ENCODE measurements at regions of chr6 and their contacts with region 1.

Region 1: DNA sequence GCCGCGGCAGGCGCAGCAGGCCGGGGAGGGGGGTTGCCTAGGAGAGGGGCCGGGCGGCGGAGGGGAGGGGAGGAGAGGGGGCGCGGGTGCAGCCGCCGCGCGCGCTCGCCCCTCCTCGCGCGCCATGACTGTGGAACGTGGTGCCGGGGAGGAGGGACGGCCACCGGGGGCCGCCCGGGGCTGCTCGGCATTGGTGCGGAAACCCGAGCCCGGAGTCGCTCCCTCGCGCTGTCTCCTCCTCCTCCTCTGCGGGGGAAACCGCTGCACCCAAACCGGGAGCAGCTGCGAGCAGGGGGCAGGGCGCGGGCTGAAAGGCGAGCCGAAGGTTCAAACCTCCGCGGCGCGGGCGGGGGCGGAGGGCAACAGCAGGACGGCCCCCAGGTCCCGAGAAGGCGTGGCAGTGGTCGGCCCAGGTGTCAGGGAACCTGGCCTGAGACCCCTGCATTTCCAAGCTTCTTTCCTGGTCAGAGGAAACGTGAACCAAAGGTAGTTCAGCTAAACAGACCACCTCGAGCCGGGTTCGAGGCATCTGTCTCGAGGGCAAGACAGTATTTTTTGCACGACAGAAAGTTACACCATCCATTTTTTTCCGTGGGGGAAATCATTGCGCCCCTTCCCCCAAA is 1.4 kb upstream of the TRERF1 start:
- DNase-seq: peak; percentile 90 to 91
- ATAC-seq: peak; percentile 91 to 96 (median 92)
- H3K4me3 ChIP-seq: peak overlapping the region; percentile 61 to 91 (median 80)
- H3K27ac ChIP-seq: peak overlapping the region; percentile 68 to 97 (median 92)
- H3K4me1 ChIP-seq: peaks cover 3 to 46% (median 19%) of the 10 kb centered on the region in 9 donors
- H3K27me3 ChIP-seq: no peaks in the 10 kb centered on the region
- CTCF ChIP-seq: peak in 4 of 9 donors; percentile 7 to 27 (median 8)

Region 2: GRCh38 chr6:41936073-41936837 is 516.9 kb before region 1 on chr6:
- intact Hi-C with region 1: no loop called
- DNase-seq: peak; percentile 56 to 81
- ATAC-seq: peak; percentile 46 to 79 (median 70)
- H3K4me3 ChIP-seq: peak overlapping the region in 1 of 10 donors; percentile 11
- H3K27ac ChIP-seq: peak overlapping the region in 8 of 10 donors; percentile 11 to 94 (median 88)
- H3K4me1 ChIP-seq: peaks cover 26 to 64% (median 49%) of the 10 kb centered on the region in 9 donors
- H3K27me3 ChIP-seq: no peaks in the 10 kb centered on the region
- CTCF ChIP-seq: peak; percentile 67 to 85 (median 81)

Region 3: DNA sequence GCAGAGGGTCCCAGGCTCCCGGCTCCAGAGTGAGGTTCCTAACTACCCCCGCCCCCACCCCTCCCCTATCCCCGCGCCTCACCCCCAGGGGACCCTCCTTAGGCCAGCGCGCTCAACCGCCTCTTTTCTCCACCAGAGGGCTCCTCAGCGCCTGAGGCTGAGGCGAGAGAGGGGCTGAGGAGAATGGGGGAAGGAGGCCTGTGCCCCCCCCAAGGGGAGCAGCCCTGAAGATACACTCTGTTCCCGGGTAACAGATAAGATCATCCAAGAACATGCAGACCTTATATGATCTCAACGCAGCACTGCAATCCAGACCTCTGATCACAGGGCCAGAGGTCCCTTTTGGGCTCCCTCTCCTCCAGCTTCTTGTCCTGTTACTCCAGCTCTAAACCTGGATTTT is 192.2 kb before region 1 on chr6:
- intact Hi-C with region 1: loop called in 5 of 10 experiments (anchors 5 to 10 kb)
- DNase-seq: peak in 1 of 2 donors; percentile 54
- ATAC-seq: peak; percentile 53 to 80 (median 70)
- H3K4me3 ChIP-seq: peak overlapping the region in 1 of 10 donors; percentile 8
- H3K27ac ChIP-seq: peak overlapping the region in 4 of 10 donors; percentile 19 to 46 (median 32)
- H3K4me1 ChIP-seq: peaks cover 6 to 50% (median 16%) of the 10 kb centered on the region in 9 donors
- H3K27me3 ChIP-seq: no peaks in the 10 kb centered on the region
- CTCF ChIP-seq: peak in 8 of 9 donors; percentile 31 to 68 (median 61)

Region 4: DNA sequence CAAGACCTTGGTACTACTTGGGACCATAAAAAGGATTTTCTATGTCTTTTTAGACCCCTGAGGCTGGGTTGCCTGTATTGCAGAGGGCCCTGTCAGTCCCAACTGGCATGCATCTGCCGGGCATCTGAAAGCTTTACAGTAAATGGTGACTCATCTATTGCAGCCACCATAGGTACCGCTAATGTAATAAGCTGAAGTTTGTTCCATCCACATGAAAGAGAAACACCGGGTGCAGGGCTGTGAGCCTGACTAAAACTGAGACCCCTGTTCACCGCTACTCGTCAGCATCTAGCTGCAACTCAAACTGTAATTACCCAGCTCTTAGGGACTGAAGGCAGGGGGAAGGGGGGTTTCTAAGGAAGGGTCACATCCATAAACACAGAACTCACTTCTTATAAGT is 51.0 kb before region 1 on chr6:
- intact Hi-C with region 1: loop called in 4 of 10 experiments (anchors 2 to 5 kb)
- DNase-seq: no peak
- ATAC-seq: no peak
- H3K4me3 ChIP-seq: no peak overlapping the region
- H3K27ac ChIP-seq: peak overlapping the region in 1 of 10 donors; percentile 45
- H3K4me1 ChIP-seq: peaks cover 3 to 57% (median 38%) of the 10 kb centered on the region in 9 donors
- H3K27me3 ChIP-seq: no peaks in the 10 kb centered on the region
- CTCF ChIP-seq: no peak

Region 5: DNA sequence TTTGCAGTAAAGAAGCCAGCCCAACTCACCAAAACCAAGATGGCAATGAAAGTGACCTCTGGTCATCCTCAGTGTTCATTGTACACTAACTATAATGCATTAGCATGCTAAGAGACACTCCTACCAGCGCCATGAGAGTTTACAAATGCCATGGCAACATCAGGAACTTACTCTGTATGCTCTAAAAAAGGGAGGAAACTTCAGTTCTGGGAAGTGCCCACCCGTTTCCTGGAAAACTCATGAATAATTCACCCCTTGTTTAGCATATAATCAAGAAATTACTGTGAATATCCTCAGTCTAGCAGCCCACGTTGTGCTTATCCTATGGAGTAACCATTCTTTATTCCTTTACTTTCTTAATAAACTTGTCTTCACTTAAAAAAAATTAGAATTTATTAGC is 18.0 kb after region 1 on chr6:
- intact Hi-C with region 1: loop called in 1 of 10 experiments (anchors 1 kb)
- DNase-seq: no peak
- ATAC-seq: no peak
- H3K4me3 ChIP-seq: no peak overlapping the region
- H3K27ac ChIP-seq: no peak overlapping the region
- H3K4me1 ChIP-seq: no peaks in the 10 kb centered on the region
- H3K27me3 ChIP-seq: no peaks in the 10 kb centered on the region
- CTCF ChIP-seq: no peak

Region 6: DNA sequence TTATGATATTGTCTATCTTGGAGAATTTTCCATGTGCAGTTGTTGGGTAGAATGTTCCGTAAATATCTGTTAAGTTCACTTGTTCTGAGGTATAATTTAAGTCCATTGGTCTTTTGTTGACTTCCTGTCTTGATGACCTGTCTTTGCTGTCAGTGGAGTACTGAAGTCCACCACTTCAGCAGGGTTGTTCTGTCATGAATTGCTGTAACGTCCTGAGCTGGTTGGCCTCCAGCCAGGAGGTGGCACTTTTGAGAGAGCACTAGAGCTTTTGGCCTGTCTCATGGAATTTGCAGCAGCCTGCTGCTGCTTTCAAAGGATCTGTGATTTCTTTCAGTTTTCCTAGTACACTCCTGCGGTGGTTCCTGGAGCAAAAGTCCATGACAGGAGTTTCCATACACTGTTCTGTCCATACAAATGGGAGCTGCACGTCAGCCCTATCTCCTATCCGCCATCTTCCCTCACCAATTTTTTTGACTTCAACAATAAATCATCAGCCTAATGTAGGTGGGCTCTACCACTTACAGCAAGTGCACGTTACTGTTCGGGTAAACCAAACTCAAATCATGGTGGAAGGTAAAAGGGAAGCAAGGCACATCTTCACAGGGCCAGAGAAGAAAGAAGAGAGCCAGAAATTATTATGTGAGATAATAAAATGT is 45.5 kb after region 1 on chr6:
- intact Hi-C with region 1: no loop called
- DNase-seq: peak; percentile 11 to 49
- ATAC-seq: peak in 1 of 8 donors; percentile 41
- H3K4me3 ChIP-seq: no peak overlapping the region
- H3K27ac ChIP-seq: no peak overlapping the region
- H3K4me1 ChIP-seq: no peaks in the 10 kb centered on the region
- H3K27me3 ChIP-seq: peaks cover 0 to 4% (median 0%) of the 10 kb centered on the region in 7 donors
- CTCF ChIP-seq: no peak